Right cardiac atrium (tissue), 5 donors: ENCODE measurements at regions of chr7 and their contacts with region 1.

Region 1: GRCh38 chr7:84729284-84729683 is 457.6 kb downstream of the SEMA3D start:
- DNase-seq: no peak
- ATAC-seq: no peak
- H3K4me3 ChIP-seq: no peak overlapping the region
- H3K27ac ChIP-seq: no peak overlapping the region
- H3K4me1 ChIP-seq: no peaks in the 10 kb centered on the region
- H3K27me3 ChIP-seq: no peaks in the 10 kb centered on the region

Region 2: GRCh38 chr7:84746353-84746752 is 17.1 kb after region 1 on chr7:
- intact Hi-C with region 1: loop called in 1 of 4 experiments (anchors 2 kb)
- DNase-seq: peak in 1 of 3 donors; percentile 28
- ATAC-seq: peak; percentile 66 to 86
- H3K4me3 ChIP-seq: no peak overlapping the region
- H3K27ac ChIP-seq: no peak overlapping the region
- H3K4me1 ChIP-seq: no peaks in the 10 kb centered on the region
- H3K27me3 ChIP-seq: no peaks in the 10 kb centered on the region